Dendritic cell treated with granulocyte-macrophage colony-stimulating factor and Interleukin-4, amounts not matched to agents 40 ng/mL and 50 ng/mL, for 4 days (primary cell): ENCODE measurements at regions of chr5 and their contacts with region 1.

Region 1: DNA sequence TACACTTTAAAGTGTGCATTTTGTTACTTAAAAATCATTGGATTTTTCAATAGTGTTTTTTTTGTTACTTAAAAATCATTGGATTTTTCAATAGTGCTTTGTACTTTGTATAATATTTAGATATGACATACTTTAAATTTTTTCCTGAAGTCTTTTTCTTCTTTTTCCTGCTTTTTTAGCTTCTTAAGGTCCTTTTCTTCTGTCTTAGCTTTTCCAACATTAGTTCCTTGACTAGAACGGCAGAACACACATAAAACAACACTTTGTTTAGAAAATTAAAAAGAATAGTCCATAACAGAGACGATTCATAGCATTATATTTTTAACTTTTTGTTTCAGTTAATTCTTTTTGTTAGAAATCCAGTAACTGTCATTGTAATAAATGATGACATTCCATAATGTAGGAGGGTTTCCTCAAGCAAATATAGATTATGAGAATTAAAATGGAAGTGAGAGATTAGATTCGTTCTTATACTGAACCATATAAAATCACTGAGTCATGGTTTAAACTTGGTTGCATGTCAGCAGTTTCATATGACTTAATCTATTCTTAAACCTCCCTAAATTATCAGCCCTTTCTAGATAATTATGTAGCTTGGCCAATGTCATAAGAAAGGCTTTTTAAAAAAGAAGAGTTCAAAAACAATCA is 45.3 kb upstream of the RICTOR start:
- H3K4me3 Mint-ChIP-seq: no peak overlapping the region
- H3K27ac Mint-ChIP-seq: no peak overlapping the region
- H3K4me1 Mint-ChIP-seq: no peaks in the 10 kb centered on the region
- H3K27me3 Mint-ChIP-seq: no peaks in the 10 kb centered on the region

Region 2: DNA sequence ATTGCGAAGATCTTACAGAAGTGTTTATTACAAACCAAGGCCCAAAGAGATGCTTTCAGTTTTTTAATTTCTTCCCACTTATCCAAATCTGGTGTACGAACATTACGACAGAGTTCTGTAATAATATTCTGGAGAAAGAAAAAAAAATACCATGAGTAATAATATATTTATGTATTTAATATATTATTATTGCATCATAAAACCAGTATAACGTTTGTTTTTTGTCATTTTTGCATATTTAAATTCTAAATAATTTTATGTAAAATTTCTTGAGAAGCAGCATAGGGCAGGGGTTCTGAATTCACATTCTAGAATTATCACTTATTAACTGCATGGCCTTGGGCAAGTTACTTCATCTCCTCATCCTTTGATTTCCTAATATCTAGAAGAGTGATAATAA is 166.1 kb before region 1 on chr5:
- intact Hi-C with region 1: loop called (anchors 5 kb)
- H3K4me3 Mint-ChIP-seq: no peak overlapping the region
- H3K27ac Mint-ChIP-seq: no peak overlapping the region
- H3K4me1 Mint-ChIP-seq: no peaks in the 10 kb centered on the region
- H3K27me3 Mint-ChIP-seq: no peaks in the 10 kb centered on the region

Region 3: GRCh38 chr5:39015743-39016586 is 103.6 kb before region 1 on chr5:
- intact Hi-C with region 1: no loop called
- H3K4me3 Mint-ChIP-seq: no peak overlapping the region
- H3K27ac Mint-ChIP-seq: no peak overlapping the region
- H3K4me1 Mint-ChIP-seq: peaks cover 20% of the 10 kb centered on the region
- H3K27me3 Mint-ChIP-seq: no peaks in the 10 kb centered on the region

Region 4: DNA sequence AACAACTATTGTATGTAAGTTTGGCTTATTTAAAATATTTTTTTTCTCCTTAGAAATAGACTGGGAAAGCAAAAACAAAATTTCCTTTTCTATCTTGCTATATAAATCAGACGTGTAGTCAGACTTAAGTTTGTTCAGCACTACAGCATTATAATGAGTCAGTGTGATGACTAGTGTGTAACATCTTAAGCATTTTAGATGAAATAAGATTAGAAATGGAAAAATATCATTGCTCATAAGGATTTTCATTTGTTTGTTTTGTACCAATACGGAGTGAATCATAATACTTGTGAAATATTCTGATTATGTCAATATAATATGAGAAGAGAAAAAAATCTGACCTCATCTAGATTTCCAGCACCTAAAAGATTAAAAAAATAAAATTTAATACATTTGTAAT is 19.4 kb after region 1 on chr5:
- intact Hi-C with region 1: no loop called
- H3K4me3 Mint-ChIP-seq: no peak overlapping the region
- H3K27ac Mint-ChIP-seq: no peak overlapping the region
- H3K4me1 Mint-ChIP-seq: peaks cover 5% of the 10 kb centered on the region
- H3K27me3 Mint-ChIP-seq: no peaks in the 10 kb centered on the region